ENCODE measurements at regions of chr1 and their contacts with region 1.

Region 1: DNA sequence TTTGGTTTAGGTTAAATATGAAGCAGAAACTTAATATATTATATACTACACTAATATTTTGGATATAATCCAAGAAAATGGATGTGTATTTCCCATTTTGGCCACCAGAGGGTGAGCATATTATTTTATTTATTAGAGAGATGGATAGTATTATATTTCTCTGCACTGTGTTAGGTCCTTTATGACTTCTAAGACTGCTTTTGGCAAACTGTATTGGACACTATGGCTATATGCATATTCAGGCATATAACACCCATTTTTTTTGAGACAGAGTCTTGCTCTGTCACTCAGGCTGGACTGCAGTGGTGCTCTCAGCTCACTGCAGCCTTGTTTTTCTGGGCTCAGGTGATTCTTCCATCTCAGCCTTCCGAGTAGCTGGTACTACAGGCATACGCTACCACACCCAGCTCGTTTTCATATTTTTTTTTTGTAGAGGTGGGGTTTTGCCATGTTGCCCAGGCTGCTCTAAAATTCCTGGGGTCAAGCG is 17.8 kb upstream of the PGM1 start:
- DNase-seq: no peak
- H3K4me3 ChIP-seq: no peak overlapping the region
- H3K27me3 ChIP-seq: no peaks in the 10 kb centered on the region
- CTCF ChIP-seq: peak; percentile 53

Region 2: DNA sequence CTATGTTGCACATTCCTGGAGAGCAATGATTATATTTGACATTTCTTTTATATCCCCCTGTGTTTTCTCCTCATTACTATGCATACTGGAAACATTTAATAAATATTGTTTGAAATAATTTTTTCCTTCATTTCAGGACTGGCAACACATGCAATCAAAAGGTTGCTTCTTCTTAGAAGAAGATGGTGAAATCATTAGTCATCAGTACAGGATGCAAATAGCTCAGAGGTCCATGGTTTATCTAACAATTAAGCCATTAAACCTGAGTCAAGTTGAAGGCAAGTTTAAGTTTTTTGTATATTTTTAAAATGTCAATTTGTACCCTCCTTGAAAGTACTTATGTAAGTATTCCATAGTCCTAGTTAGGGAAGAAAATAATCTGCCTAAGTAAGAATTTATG is 29.6 kb before region 1 on chr1:
- CTCF ChIA-PET with region 1: no interaction called
- POLR2A ChIA-PET with region 1: no interaction called
- DNase-seq: no peak
- H3K4me3 ChIP-seq: no peak overlapping the region
- H3K27me3 ChIP-seq: no peaks in the 10 kb centered on the region
- CTCF ChIP-seq: no peak

Region 3: DNA sequence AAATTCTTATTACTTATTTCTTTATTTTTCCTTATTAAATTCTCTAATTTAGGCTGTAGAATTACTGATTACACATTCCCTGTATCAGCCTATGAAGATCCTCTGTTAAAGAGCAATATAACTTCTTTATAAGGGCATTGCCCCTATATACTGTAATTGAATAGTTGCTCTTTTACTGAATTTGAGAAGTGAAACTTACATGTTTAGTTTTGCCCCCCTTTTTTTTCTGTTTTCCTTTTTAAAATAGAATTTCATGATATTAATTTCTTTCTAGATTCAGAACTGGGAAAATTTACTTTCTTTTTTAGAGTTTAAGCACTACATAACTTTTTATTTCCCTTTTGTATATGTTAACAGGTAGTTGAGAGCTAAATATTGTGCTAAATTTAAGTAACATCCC is 11.6 kb before region 1 on chr1:
- CTCF ChIA-PET with region 1: interaction called, 12 read pairs
- POLR2A ChIA-PET with region 1: no interaction called
- DNase-seq: no peak
- H3K4me3 ChIP-seq: no peak overlapping the region
- H3K27me3 ChIP-seq: no peaks in the 10 kb centered on the region
- CTCF ChIP-seq: no peak